Mammary epithelial cell (primary cell): ENCODE measurements at regions of chr22 and their contacts with region 1.

Region 1: GRCh38 chr22:32745251-32745995 is 56.1 kb upstream of the TIMP3 start:
- DNase-seq: peak; percentile 73
- H3K4me3 ChIP-seq: no peak overlapping the region
- H3K27ac ChIP-seq: peak overlapping the region; percentile 23
- H3K4me1 ChIP-seq: peaks cover 14% of the 10 kb centered on the region
- H3K27me3 ChIP-seq: no peaks in the 10 kb centered on the region
- CTCF ChIP-seq: no peak

Region 2: GRCh38 chr22:31790240-31790639 is 955.2 kb before region 1 on chr22:
- CTCF ChIA-PET with region 1: no interaction called
- dilution Hi-C with region 1: no loop called
- in situ Hi-C with region 1: no loop called
- intact Hi-C with region 1: no loop called
- DNase-seq: no peak
- H3K4me3 ChIP-seq: no peak overlapping the region
- H3K27ac ChIP-seq: no peak overlapping the region
- H3K4me1 ChIP-seq: no peaks in the 10 kb centered on the region
- H3K27me3 ChIP-seq: no peaks in the 10 kb centered on the region
- CTCF ChIP-seq: no peak

Region 3: DNA sequence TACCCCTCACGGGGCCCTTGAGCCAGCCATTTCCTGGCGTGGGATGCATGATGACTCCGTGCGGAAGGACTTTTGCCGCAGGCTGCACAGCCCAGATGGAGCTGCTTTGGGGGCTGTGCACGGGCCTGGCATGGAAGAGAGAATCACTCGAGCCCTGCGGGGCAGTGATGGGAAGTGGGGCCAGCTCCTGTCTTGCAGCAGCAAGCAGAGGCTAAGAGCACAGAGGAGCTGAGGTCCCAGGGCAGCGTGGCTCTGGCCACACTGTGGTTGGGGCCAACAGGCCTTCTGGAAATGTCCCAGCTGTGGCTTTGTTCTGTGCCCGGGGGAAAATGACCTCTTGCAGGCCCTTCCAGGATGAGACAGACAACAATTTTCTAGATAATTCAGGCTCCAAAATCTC is 36.6 kb before region 1 on chr22:
- CTCF ChIA-PET with region 1: no interaction called
- dilution Hi-C with region 1: loop called (anchors 5 kb)
- in situ Hi-C with region 1: no loop called
- intact Hi-C with region 1: no loop called
- DNase-seq: peak; percentile 61
- H3K4me3 ChIP-seq: no peak overlapping the region
- H3K27ac ChIP-seq: peak overlapping the region; percentile 11
- H3K4me1 ChIP-seq: peaks cover 26% of the 10 kb centered on the region
- H3K27me3 ChIP-seq: no peaks in the 10 kb centered on the region
- CTCF ChIP-seq: no peak

Region 4: DNA sequence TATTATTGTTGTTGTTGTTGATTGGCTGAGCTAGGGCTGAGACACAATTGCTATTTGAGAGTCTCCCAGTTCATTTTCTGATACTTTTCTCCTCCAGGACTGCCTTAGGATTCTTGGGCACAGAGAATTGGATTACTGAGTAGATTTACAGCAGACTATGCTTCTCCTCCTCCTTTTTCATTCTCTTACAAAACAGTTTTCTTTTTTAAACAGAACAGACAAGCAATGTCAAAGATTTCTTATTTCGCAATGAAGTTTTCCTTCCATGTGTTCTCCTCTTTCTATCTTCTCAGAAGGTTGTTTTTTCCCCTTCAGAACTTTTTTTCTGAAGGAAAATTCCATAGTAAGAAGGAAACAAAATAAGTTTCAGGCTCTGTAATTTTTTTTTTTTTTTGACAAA is 36.3 kb after region 1 on chr22:
- CTCF ChIA-PET with region 1: interaction called, 6 read pairs
- dilution Hi-C with region 1: loop called (anchors 5 kb)
- in situ Hi-C with region 1: no loop called
- intact Hi-C with region 1: no loop called
- DNase-seq: no peak
- H3K4me3 ChIP-seq: no peak overlapping the region
- H3K27ac ChIP-seq: no peak overlapping the region
- H3K4me1 ChIP-seq: peaks cover 14% of the 10 kb centered on the region
- H3K27me3 ChIP-seq: no peaks in the 10 kb centered on the region
- CTCF ChIP-seq: no peak